ENCODE measurements at regions of chr7 and their contacts with region 1.

Region 1: GRCh38 chr7:74656837-74657691 is 454 bp upstream of the GTF2I start:
- DNase-seq: peak; percentile 86 to 99
- H3K4me3 ChIP-seq: peak overlapping the region; percentile 98
- H3K27ac ChIP-seq: peak overlapping the region; percentile 68
- H3K4me1 ChIP-seq: peaks cover 51% of the 10 kb centered on the region
- H3K27me3 ChIP-seq: no peaks in the 10 kb centered on the region
- CTCF ChIP-seq: peak; percentile 27; the same call in 1 of the 2 replicates

Region 2: DNA sequence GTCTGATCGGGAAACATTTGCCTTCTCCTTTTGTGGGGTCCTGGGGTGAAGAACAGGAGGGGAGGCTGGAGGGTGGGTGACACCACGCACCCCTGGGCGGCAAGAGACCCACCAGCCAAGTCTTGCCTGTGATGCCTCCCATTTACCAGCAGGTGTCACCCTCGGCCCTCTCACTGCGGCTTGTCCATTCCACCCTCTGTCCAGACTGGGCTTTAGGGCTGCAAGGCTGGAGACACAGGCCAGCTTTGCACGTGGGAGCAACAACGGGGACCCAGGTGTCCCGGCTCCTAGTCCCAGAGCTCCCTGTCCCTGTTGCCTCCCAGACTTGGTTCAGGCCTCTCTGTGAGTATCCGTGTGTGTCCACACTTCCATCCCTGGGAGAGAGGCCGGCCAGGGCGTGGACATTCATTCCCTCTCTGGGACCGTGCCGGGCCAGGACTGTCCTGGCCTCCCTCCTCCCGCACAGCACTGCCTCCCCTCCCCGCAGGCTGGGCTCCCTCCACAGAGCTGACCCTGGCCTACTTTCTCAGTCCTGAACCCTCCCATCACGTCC is 239.6 kb before region 1 on chr7:
- CTCF ChIA-PET with region 1: no interaction called
- POLR2A ChIA-PET with region 1: no interaction called
- intact Hi-C with region 1: loop called (anchors 2 kb)
- DNase-seq: peak; percentile 44 to 75
- H3K4me3 ChIP-seq: no peak overlapping the region
- H3K27ac ChIP-seq: no peak overlapping the region
- H3K4me1 ChIP-seq: no peaks in the 10 kb centered on the region
- H3K27me3 ChIP-seq: no peaks in the 10 kb centered on the region
- CTCF ChIP-seq: peak; percentile 96

Region 3: GRCh38 chr7:74479961-74480829 is 176.9 kb before region 1 on chr7:
- CTCF ChIA-PET with region 1: no interaction called
- POLR2A ChIA-PET with region 1: no interaction called
- intact Hi-C with region 1: loop called (anchors 2 kb)
- DNase-seq: no peak
- H3K4me3 ChIP-seq: no peak overlapping the region
- H3K27ac ChIP-seq: peak overlapping the region; percentile 49; the same call in 1 of the 2 replicates
- H3K4me1 ChIP-seq: peaks cover 93% of the 10 kb centered on the region
- H3K27me3 ChIP-seq: no peaks in the 10 kb centered on the region
- CTCF ChIP-seq: no peak

Region 4: DNA sequence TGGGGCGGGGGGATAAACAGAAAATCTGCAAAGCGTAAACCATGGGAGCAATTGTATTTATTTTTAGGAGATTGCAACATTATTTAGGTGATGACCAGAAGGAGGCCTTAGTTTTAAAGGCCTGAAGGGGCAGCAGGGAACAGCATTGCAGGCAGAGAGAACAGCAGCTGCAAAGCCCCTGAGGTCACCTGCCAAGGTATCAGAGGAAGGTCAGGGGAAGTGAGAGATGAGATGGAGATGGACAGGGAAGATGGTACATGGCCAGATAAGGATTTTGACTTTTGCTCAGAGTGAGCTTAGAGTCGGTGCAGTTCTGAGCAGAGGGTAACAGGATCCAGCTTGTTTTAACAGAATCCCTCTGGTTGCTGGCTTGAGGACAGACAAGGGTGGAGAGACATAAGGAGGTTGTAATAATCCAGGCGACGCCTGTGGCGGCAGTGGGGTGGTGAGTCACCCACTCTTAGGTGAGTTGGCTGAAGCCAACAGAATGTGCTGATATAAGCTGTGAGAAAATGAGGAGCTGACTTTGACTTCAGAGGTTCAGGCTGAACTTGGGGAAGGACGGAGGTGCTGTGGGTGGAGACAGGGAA is 81.8 kb before region 1 on chr7:
- CTCF ChIA-PET with region 1: interaction called, 3 read pairs
- POLR2A ChIA-PET with region 1: interaction called, 4 read pairs
- intact Hi-C with region 1: loop called (anchors 1 kb)
- DNase-seq: peak; percentile 82 to 87
- H3K4me3 ChIP-seq: no peak overlapping the region
- H3K27ac ChIP-seq: peak overlapping the region; percentile 78
- H3K4me1 ChIP-seq: peaks cover 56% of the 10 kb centered on the region
- H3K27me3 ChIP-seq: no peaks in the 10 kb centered on the region
- CTCF ChIP-seq: no peak

Region 5: GRCh38 chr7:74606101-74606908 is 50.8 kb before region 1 on chr7:
- CTCF ChIA-PET with region 1: no interaction called
- POLR2A ChIA-PET with region 1: no interaction called
- intact Hi-C with region 1: loop called (anchors 1 kb)
- DNase-seq: peak in 1 of 2 experiments; percentile 79
- H3K4me3 ChIP-seq: no peak overlapping the region
- H3K27ac ChIP-seq: no peak overlapping the region
- H3K4me1 ChIP-seq: peaks cover 35% of the 10 kb centered on the region
- H3K27me3 ChIP-seq: no peaks in the 10 kb centered on the region
- CTCF ChIP-seq: no peak

Region 6: DNA sequence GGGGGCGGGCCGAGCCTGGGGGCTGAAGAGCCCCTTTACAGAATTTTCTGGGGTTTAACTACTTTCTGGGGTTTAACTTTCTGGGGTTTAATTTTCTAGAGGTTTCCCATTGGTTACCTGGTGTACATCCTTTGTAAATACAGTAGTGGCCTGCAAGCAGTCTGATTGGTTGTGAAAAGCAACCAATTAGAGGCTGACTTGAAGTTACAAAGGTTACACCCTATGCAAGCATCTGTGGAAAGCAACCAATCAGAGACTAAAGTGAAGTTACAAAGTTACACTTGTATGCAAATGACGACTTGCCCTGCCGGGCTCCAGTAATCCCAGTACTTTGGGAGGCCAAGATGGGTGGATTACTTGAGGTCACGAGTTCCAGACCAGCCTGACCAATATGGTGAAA is 27.9 kb after region 1 on chr7:
- CTCF ChIA-PET with region 1: no interaction called
- POLR2A ChIA-PET with region 1: no interaction called
- intact Hi-C with region 1: no loop called
- DNase-seq: no peak
- H3K4me3 ChIP-seq: no peak overlapping the region
- H3K27ac ChIP-seq: no peak overlapping the region
- H3K4me1 ChIP-seq: no peaks in the 10 kb centered on the region
- H3K27me3 ChIP-seq: no peaks in the 10 kb centered on the region
- CTCF ChIP-seq: no peak